Cardiac septum (tissue), 1 donor: ENCODE measurements at regions of chr3 and their contacts with region 1.

Region 1: DNA sequence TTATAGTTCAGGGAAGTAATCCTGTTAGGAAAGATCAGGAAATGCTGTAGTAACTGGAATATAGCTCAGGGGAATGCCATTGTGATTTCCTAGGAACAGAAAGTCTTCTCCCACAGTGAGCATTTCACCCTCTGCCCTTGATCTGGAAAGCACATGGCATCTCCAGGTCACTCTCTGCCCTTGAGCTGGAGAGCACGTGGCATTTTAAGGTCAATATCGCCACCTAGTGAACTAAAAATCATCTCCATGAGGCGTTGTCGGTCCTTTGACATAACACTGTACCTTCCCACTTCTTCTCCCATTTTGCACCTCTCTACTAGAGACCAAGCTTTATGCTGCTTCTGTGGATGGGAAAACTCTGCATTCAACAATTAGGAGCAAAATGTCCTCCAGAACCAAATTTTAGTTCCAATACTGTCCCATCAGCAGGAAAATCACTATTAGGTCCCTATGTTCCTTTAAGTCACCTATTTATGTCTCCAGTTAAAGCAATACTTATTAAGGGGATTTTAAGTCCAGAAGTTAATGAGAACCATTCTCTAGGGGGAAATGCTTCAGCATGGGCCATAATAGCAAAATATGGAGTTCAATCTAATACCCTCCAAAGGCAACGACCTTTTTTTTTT is 54.7 kb upstream of the GK5 start:
- DNase-seq: no peak

Region 2: GRCh38 chr3:141963301-141963700 is 316.8 kb before region 1 on chr3:
- intact Hi-C with region 1: loop called (anchors 2 kb)
- DNase-seq: no peak

Region 3: GRCh38 chr3:142022381-142022780 is 257.7 kb before region 1 on chr3:
- intact Hi-C with region 1: loop called (anchors 5 kb)
- DNase-seq: no peak

Region 4: GRCh38 chr3:142127941-142128658 is 152.0 kb before region 1 on chr3:
- intact Hi-C with region 1: loop called (anchors 2 kb)
- DNase-seq: no peak

Region 5: DNA sequence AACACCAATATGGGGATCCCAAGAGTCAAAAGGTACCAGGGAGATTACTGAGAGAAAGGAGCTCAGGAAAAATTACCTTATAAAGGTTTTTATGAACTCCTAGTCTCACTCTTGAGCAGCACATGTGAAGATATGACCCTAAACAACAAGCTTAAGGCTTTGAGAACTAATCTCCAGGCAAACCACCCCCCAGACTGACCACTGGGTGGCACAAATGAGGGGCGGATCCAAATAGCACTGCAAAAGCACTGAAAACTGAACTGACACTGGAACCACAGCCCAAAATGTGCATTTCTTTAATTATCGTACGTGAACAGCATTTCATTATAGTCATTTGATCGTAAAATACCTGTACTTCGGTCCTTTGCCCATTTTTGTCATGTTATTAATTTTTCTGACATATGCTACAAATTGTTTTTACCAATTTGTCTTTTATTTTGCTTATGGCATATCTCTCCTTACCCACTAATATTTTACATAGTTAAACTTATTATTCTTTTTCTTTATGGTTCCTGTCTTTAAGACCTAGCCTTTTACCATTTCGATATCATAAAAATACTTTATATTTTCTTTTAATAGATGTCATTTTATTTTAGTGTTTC is 99.2 kb before region 1 on chr3:
- intact Hi-C with region 1: loop called (anchors 2 kb)
- DNase-seq: no peak

Region 6: GRCh38 chr3:142232340-142232739 is 47.7 kb before region 1 on chr3:
- intact Hi-C with region 1: loop called (anchors 5 kb)
- DNase-seq: no peak